Colonic mucosa (tissue), 4 donors: ENCODE measurements at regions of chr14 and their contacts with region 1.

Region 1: GRCh38 chr14:102774391-102775153 is 2.7 kb upstream of the TRAF3 start:
- DNase-seq: peak; percentile 72
- H3K4me3 ChIP-seq: no peak overlapping the region
- H3K27ac ChIP-seq: no peak overlapping the region
- H3K4me1 ChIP-seq: no peaks in the 10 kb centered on the region
- H3K27me3 ChIP-seq: no peaks in the 10 kb centered on the region
- CTCF ChIP-seq: peak; percentile 72

Region 2: GRCh38 chr14:102917469-102918211 is 143.1 kb after region 1 on chr14:
- intact Hi-C with region 1: loop called (anchors 5 kb)
- DNase-seq: peak; percentile 77
- H3K4me3 ChIP-seq: no peak overlapping the region
- H3K27ac ChIP-seq: no peak overlapping the region
- H3K4me1 ChIP-seq: no peaks in the 10 kb centered on the region
- H3K27me3 ChIP-seq: no peaks in the 10 kb centered on the region
- CTCF ChIP-seq: peak; percentile 56

Region 3: GRCh38 chr14:103031956-103032355 is 257.4 kb after region 1 on chr14:
- intact Hi-C with region 1: no loop called
- DNase-seq: peak; percentile 55
- H3K4me3 ChIP-seq: no peak overlapping the region
- H3K27ac ChIP-seq: peak overlapping the region; percentile 58
- H3K4me1 ChIP-seq: peaks cover 21% of the 10 kb centered on the region
- H3K27me3 ChIP-seq: no peaks in the 10 kb centered on the region
- CTCF ChIP-seq: no peak